ENCODE measurements at regions of chr16 and their contacts with region 1.

Region 1: DNA sequence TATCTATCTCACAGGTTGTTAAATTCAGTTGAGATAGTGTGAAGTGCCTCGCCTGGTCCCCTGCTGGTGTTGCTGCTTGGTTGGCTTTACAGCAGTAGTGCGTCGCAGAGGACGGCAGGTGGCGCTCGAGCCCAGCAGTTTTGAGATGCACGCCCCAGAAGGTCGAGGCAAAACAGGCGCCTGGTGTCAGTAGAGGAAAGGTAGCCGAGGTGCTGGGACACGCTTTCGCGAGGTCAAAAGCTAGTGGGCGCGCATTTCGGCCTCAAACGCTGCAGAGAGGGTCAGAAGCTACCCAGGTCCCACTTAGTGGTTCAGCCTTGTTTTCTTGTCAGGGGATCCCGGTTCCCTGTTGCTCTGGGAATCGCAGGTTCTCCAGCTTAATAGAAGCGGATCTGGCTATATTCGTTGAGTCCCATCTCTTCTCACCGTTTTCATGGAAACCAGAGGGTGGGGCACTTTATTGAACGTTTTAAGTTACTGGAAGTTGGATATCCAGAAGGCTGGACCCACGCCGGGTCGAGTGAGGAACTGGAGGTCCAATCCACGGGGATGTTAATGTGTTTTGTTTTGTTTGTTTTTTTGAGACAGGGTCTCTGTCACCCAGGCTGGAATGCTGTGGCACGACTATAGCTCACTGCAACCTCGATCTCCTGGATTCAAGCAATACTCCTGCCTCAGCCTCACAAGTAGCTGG is 10.3 kb upstream of the ZFP90 start:
- DNase-seq: peak; percentile 75 to 98 (median 90)

Region 2: DNA sequence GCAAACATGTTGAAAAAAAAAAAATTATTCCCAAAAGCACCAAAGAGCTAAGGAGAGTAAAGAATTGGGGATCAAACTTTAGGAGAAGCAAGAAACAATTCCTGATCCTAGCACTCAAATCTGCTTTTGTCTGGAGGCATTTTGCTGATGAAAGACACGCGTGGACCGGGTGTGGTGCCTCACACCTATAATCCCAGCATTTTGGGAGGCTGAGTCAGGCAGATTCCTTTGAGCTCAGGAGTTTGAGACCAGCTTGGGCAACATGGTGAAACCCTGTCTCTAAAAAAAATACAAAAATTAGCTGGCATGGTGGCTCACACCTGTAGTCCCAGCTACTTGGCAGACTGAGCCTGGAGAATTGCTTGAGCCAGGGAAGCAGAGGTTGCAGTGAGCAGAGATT is 45.6 kb after region 1 on chr16:
- intact Hi-C with region 1: no loop called
- DNase-seq: no peak

Region 3: DNA sequence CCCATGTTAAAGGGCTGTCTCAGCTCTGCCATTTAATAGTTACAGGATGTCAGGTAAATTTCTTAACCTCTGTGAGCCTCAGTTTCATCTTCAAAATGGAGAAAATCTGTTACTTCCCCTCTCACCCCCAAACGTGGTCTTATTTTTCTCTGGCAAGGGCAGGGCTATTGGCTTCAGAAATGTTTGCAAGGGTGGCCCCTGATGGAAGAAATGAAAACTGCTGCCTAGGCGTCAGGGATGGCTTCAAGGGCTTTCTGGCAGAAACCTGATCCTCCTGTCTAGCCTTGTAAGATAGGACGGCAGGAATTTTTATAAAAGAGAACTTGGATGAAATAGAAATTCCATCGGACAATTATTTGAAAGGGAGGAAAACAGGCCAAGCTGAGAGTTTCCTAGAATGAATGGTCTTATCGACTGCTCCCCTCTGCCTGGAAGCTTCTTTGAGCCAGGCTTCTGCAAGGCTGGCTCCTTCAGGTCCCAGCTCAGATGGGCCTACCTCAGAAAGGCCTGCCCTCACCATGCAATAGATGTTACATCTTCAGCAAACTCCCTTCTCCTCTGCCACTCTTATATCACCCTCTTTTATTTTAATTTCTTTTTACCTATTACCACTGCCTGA is 271.5 kb after region 1 on chr16:
- intact Hi-C with region 1: loop called (anchors 10 kb)
- DNase-seq: peak in 6 of 10 donors; percentile 13 to 92 (median 60)

Region 4: DNA sequence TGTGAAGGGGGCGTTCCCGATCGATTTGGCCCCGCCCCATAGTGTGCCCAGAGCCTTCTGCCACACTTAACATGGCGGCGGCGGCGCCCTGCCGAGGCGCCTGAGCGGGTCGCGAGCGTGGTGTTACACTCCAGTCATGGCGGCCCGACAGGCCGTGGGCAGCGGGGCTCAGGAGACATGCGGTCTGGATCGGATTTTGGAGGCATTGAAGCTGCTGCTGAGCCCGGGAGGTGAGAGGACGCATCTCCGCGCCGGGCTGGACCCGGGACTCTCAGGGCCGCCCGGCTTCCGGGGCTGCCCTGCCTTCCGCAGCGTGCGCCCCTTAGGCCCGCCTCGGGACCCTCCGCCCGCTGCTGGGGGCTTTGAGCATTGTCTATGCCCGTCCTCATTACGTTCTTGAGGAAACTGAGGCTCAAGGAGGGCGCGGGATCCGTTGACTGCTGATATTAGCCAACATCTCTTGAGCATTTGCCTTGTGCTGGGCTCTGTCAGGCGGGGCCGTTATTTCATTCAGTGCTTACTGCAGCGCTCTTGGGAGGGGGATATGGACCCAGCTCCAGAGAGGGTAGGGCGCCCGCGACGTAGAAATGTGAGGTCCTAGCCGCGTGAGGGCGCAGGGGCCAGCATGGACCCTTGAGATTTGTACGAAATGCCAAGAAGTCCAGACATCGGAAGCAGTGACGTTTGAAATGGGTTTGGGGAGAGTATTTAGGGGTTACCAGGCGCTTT is 314.8 kb after region 1 on chr16 and contains the start of gene TANGO6:
- intact Hi-C with region 1: loop called (anchors 5 kb)
- DNase-seq: peak; percentile 73 to 97 (median 85)

Region 5: DNA sequence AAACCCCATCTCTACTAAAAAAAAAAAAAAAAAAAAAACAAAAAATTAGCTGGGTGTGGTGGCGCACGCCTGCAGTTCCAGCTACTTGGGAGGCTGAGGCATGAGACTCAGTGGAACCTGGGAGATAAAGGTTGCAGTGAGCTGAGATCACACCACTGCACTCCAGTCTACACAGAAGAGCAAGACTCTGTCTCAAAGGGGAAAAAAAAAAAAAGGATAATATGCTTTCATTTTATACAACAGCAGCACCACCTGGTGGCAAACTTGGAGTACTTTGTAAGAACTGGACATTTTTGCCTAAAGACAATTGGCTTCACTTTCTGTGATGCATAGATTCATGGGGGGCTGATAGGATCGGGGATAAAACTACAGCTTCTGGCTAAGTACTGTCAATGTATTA is 595.1 kb after region 1 on chr16:
- intact Hi-C with region 1: loop called (anchors 2 kb)
- DNase-seq: peak in 2 of 10 donors; percentile 42 to 45

Measured in posterior cingulate gyrus (tissue), 11 donors.